ENCODE measurements at regions of chr3 and their contacts with region 1.

Region 1: GRCh38 chr3:50245831-50246516 is 10.0 kb downstream of the GNAI2 start:
- DNase-seq: peak; percentile 96
- H3K4me3 Mint-ChIP-seq: peak overlapping the region; percentile 77
- H3K27ac Mint-ChIP-seq: peak overlapping the region; percentile 96
- H3K4me1 Mint-ChIP-seq: peaks cover 82% of the 10 kb centered on the region
- H3K27me3 Mint-ChIP-seq: no peaks in the 10 kb centered on the region

Region 2: DNA sequence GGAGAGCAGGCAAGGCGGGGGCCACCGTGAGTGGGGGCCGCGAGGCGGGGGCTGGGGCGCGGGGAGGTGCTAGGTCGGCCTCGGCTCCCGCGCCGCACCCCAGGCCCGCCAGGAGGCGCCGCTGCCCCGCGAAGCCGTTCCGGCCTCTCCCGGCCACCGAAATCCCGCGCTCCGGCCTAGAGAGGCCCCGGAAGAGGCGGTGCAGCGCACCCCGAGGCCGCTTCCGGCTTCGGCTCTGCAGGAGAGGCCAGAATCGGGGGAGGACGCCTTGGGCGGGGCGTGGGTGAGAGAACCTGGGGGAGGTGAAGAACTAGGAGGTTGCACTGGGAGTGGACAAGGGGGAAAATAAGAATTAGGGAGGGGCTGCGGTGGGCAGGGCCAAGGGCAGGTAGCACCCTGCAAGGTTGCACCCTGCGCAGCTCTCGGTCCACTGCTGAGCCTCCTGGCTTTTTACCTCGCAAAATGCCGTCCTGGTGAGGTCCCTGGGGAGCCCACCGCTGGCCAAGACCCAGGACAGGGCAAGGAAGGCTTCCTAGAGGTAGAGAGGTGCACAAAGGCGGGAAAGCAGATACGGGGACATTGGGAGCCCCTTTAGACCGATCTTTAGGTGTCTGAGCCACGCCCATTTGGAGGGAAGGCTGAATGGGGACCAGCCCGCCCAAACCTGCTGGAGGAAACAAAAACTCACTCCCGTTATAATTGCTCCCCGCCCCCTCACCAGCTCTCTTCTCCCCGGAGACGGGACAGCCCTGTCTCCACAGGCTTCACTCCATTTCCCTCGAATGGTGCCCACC is 18.4 kb before region 1 on chr3:
- CTCF ChIA-PET with region 1: interaction called, 307 read pairs
- POLR2A ChIA-PET with region 1: interaction called, 18 read pairs
- intact Hi-C with region 1: loop called (anchors 1 kb)
- DNase-seq: peak; percentile 94
- H3K4me3 Mint-ChIP-seq: peak overlapping the region; percentile 94
- H3K27ac Mint-ChIP-seq: peak overlapping the region; percentile 90
- H3K4me1 Mint-ChIP-seq: peaks cover 17% of the 10 kb centered on the region
- H3K27me3 Mint-ChIP-seq: no peaks in the 10 kb centered on the region

Region 3: GRCh38 chr3:50260027-50260941 is 14.3 kb after region 1 on chr3:
- CTCF ChIA-PET with region 1: interaction called, 102 read pairs
- POLR2A ChIA-PET with region 1: interaction called, 6 read pairs
- intact Hi-C with region 1: loop called (anchors 1 kb)
- DNase-seq: peak; percentile 92
- H3K4me3 Mint-ChIP-seq: peak overlapping the region; percentile 59
- H3K27ac Mint-ChIP-seq: peak overlapping the region; percentile 69
- H3K4me1 Mint-ChIP-seq: peaks cover 6% of the 10 kb centered on the region
- H3K27me3 Mint-ChIP-seq: no peaks in the 10 kb centered on the region

Region 4: GRCh38 chr3:50292159-50293078 is 46.4 kb after region 1 on chr3 and contains the start of gene IFRD2:
- CTCF ChIA-PET with region 1: interaction called, 7 read pairs
- POLR2A ChIA-PET with region 1: interaction called, 7 read pairs
- intact Hi-C with region 1: loop called (anchors 1 kb)
- DNase-seq: peak; percentile 98
- H3K4me3 Mint-ChIP-seq: peak within 1 kb of the TSS; percentile 92
- H3K27ac Mint-ChIP-seq: peak within 1 kb of the TSS; percentile 90
- H3K4me1 Mint-ChIP-seq: peaks cover 20% of the 10 kb centered on the region
- H3K27me3 Mint-ChIP-seq: no peaks in the 10 kb centered on the region
- total RNA-seq, gene IFRD2: 111 to 112 TPM

Region 5: DNA sequence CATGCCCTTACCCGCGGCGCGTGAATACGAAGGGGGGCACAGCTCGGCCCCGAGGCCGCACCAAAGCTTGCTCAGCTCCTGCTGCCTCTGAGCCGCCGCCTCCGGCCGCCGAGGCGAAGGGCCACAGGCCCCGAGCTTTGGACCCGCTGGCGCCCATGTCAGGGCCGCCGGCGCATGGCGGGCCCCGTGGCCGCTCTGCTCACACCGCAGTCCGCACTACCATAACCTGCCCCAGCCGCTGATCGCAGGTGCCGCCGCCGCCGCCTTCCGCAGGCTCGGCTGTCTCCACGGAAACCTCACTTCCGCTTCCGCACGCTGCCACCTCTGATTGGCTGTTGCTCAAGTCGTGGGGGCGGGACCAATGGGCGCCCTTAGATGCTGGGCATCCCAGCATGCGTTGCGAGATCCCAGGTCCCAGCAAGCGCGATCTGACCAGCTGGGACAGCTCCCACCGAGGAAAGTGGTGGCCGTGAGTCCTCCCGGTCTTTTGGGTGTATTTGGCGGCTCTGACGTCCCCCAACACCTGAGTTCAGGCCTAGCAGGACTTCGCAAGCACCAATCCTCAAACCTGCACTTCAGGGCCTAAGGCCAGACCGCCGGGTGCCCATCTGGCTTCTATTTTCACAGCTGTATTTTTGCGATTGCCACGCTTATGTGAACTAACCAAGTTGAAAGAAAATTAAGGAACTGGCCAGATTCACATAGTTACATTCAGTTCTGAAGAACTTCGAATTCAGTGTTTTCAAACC is 82.1 kb after region 1 on chr3 and contains the start of gene TUSC2:
- CTCF ChIA-PET with region 1: interaction called, 10 read pairs
- POLR2A ChIA-PET with region 1: interaction called, 3 read pairs
- intact Hi-C with region 1: no loop called
- DNase-seq: peak; percentile 98
- H3K4me3 Mint-ChIP-seq: peak within 1 kb of the TSS; percentile 89
- H3K27ac Mint-ChIP-seq: peak within 1 kb of the TSS; percentile 64
- H3K4me1 Mint-ChIP-seq: peaks cover 23% of the 10 kb centered on the region
- H3K27me3 Mint-ChIP-seq: no peaks in the 10 kb centered on the region
- total RNA-seq, gene TUSC2: 18.7 to 19.7 TPM